Activated CD4-positive, alpha-beta memory T cell treated with anti-CD3 and anti-CD28 coated beads, Interleukin-2, amount 10 ng/mL, durations not matched to agents 7 days and 5 days (primary cell): ENCODE measurements at regions of chr18 and their contacts with region 1.

Region 1: GRCh38 chr18:42114310-42114943 is 159.4 kb downstream of the PIK3C3 start:
- DNase-seq: peak; percentile 61
- H3K4me3 Mint-ChIP-seq: no peak overlapping the region
- H3K27ac Mint-ChIP-seq: peak overlapping the region; percentile 71
- H3K4me1 Mint-ChIP-seq: peaks cover 17% of the 10 kb centered on the region
- H3K27me3 Mint-ChIP-seq: peaks cover 14% of the 10 kb centered on the region

Region 2: DNA sequence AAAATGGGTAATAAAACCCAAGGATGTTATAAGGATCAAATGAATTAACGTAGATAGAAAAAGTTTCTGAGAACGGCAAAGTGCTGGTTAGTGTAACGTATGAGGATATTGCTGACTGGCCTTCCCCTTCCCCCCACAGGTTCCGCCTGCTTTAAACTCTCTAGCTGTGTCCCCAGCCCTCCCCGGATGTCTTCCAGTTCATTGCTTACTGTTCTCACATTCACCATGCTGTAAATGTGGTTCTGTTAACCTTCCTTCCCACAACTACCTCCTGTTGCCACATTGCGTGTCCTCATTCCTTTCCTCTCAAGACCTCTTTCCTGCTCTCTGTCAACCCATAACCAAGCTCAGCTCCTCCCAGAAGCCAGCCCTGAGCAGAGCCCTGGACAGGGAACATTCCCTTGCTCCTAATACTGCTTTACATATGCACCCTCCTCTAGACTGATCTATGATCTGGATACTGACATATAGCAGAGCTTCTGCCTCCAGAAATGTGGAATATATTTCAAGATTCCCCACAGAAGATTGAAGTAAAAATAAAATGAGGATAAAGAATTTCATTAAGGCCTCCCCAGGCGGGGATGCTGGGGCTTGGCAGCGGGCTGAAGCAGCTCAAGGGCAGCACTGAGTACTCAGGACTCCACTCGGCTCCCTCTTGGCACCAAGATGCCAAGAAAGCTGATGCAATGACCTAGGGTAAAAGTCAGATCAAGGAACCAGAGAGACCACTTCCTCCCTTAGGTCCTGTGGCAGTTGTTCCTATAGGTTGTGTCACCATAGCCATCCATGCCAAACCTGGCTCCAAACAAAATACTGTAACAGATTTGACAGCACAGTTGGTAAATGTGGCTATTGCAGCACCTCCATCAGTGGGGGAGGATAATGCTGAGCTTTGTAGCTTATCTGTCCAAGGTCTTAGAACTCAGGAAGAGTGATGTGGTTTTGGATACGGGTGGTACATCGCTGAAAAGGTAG is 295.8 kb before region 1 on chr18:
- CTCF ChIA-PET with region 1: no interaction called
- POLR2A ChIA-PET with region 1: no interaction called
- DNase-seq: no peak
- H3K4me3 Mint-ChIP-seq: no peak overlapping the region
- H3K27ac Mint-ChIP-seq: no peak overlapping the region
- H3K4me1 Mint-ChIP-seq: no peaks in the 10 kb centered on the region
- H3K27me3 Mint-ChIP-seq: peaks cover 6% of the 10 kb centered on the region

Region 3: DNA sequence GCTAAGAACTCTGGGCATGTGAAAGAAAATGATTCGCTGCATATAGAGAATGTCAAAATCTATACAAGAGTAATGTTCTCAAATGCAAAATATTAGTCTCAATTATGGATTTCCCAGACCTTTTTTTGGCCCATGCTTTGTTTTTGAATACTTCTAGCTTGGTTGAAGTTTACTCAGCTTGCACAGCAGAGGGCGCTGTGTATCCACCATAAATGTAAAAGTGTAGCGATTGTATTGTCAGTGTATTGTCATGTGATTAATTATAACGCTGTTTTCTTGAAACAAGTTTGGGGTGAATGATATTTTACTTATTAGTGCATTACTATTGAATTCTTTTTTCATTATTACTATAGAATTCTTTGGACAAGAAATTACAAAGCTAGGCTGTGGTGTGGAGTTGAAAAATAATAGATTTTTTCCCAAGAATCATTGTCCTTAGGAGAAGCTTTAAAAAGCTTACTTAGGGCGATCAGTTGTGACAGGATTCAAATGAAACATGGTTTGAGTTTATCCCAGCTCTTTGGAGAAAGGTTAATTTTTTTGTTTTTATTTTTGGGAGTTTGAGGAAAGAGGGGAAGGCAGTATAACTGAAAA is 61.1 kb before region 1 on chr18:
- CTCF ChIA-PET with region 1: interaction called, 47 read pairs
- POLR2A ChIA-PET with region 1: interaction called, 3 read pairs
- DNase-seq: peak; percentile 65
- H3K4me3 Mint-ChIP-seq: no peak overlapping the region
- H3K27ac Mint-ChIP-seq: peak overlapping the region; percentile 4
- H3K4me1 Mint-ChIP-seq: peaks cover 11% of the 10 kb centered on the region
- H3K27me3 Mint-ChIP-seq: no peaks in the 10 kb centered on the region

Region 4: DNA sequence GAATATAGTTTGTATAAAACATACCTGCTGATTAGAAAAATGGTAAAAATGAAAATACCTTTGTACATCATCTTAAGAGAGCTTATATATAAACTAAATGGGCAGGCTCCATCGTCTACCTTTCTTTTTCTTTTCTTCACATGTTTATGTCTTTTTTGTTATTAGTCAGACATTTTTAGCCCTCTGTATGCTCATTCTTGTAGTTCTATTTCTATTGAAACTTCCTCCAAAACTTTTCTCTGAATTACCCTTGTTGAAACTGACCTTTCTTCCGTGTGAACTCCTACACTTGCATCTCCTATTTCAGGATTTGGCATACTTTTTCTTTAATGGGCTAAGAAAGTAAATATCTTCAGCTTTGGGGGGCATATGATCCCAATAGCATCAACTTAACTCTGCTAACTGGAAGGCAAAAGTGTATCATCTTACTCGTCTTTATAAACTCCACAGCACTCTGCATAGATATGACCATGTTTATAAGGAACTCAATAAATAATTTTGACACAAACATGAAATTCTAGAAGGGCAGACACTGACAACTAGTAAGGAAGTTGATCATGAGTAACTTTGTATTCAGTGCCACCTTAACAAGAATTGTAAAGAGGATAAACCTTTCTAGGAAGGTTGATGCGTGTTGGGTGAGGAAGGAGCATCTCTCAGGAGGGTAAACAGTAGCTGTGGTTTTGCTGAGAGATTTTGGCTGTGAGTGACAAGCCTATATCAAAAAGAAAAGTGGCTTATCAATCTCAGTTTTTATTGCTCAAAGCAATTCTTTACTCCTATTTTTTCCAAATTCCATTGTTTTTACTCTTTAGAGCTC is 31.8 kb before region 1 on chr18:
- CTCF ChIA-PET with region 1: interaction called, 11 read pairs
- POLR2A ChIA-PET with region 1: interaction called, 4 read pairs
- DNase-seq: no peak
- H3K4me3 Mint-ChIP-seq: peak overlapping the region; percentile 39
- H3K27ac Mint-ChIP-seq: peak overlapping the region; percentile 82
- H3K4me1 Mint-ChIP-seq: peaks cover 54% of the 10 kb centered on the region
- H3K27me3 Mint-ChIP-seq: no peaks in the 10 kb centered on the region

Region 5: GRCh38 chr18:42126586-42126985 is 12.2 kb after region 1 on chr18:
- CTCF ChIA-PET with region 1: interaction called, 18 read pairs
- POLR2A ChIA-PET with region 1: no interaction called
- DNase-seq: no peak
- H3K4me3 Mint-ChIP-seq: no peak overlapping the region
- H3K27ac Mint-ChIP-seq: no peak overlapping the region
- H3K4me1 Mint-ChIP-seq: no peaks in the 10 kb centered on the region
- H3K27me3 Mint-ChIP-seq: peaks cover 1% of the 10 kb centered on the region

Region 6: GRCh38 chr18:43271593-43272432 is 1157.4 kb after region 1 on chr18:
- CTCF ChIA-PET with region 1: interaction called, 40 read pairs
- POLR2A ChIA-PET with region 1: no interaction called
- DNase-seq: no peak
- H3K4me3 Mint-ChIP-seq: no peak overlapping the region
- H3K27ac Mint-ChIP-seq: no peak overlapping the region
- H3K4me1 Mint-ChIP-seq: no peaks in the 10 kb centered on the region
- H3K27me3 Mint-ChIP-seq: no peaks in the 10 kb centered on the region